ENCODE measurements at regions of chr7 and their contacts with region 1.

Region 1: DNA sequence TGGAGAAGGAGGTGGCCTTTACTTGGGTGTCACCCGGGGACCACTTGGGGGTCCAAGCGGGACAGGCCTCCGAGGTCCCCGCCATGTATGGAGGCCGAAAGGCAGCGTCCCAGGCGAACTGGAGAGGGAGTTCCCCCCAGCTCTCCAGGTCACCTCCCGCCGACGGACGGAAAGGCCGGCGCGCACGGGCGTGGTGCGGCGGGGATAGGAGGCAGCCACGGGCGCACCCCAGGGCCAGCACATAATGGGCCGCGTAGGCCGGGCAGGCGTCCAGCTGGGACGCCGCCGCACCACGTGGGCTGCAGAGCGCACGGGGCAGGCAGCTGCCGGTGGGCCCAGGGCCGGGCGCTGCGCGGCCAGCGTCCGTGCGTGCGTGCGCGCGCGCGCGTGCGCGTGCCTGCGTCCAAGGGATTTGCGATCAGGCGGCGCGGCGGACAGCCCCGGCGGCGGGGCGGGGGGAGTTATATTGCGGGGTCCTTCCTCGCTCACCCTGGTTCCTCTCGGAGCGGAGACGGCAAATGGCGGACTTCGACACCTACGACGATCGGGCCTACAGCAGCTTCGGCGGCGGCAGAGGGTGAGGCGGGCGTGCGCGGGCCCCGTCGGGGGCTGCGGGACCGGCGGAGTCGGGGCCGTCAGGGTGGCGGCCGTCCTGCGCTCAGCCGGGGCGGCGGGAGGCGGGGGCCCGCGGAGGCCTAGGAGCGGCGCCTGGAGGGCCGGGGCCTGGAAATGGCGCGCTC is at the start of gene EIF4H:
- DNase-seq: peak; percentile 97
- ATAC-seq: peak; percentile 75
- H3K4me3 Mint-ChIP-seq: peak within 1 kb of the TSS; percentile 94
- H3K27ac Mint-ChIP-seq: peak within 1 kb of the TSS; percentile 94
- H3K4me1 Mint-ChIP-seq: peaks cover 41% of the 10 kb centered on the region
- H3K27me3 Mint-ChIP-seq: no peaks in the 10 kb centered on the region
- total RNA-seq, gene EIF4H: 441 to 496 TPM

Region 2: DNA sequence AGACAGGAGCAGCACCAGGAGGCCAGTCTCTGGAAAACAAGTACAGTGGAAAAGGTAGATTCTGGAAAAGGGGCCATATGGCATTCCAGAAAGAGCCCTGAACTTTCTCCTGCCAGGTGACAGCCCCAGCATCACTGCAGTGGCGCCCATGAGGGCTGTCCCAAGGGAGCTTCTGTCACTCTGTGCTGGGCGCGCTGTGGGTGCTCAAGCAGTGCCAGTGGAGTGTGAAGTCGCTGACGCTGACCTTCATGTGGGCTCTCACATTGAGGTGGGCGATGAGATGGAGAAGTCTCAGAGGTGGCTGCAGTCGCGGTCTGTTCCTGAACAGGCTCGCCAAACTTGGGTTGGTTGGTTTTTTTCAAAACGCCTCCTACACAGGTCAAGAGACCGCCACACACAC is 807.9 kb before region 1 on chr7:
- CTCF ChIA-PET with region 1: no interaction called
- POLR2A ChIA-PET with region 1: no interaction called
- intact Hi-C with region 1: no loop called
- DNase-seq: no peak
- ATAC-seq: no peak
- H3K4me3 Mint-ChIP-seq: no peak overlapping the region
- H3K27ac Mint-ChIP-seq: no peak overlapping the region
- H3K4me1 Mint-ChIP-seq: no peaks in the 10 kb centered on the region
- H3K27me3 Mint-ChIP-seq: no peaks in the 10 kb centered on the region

Region 3: DNA sequence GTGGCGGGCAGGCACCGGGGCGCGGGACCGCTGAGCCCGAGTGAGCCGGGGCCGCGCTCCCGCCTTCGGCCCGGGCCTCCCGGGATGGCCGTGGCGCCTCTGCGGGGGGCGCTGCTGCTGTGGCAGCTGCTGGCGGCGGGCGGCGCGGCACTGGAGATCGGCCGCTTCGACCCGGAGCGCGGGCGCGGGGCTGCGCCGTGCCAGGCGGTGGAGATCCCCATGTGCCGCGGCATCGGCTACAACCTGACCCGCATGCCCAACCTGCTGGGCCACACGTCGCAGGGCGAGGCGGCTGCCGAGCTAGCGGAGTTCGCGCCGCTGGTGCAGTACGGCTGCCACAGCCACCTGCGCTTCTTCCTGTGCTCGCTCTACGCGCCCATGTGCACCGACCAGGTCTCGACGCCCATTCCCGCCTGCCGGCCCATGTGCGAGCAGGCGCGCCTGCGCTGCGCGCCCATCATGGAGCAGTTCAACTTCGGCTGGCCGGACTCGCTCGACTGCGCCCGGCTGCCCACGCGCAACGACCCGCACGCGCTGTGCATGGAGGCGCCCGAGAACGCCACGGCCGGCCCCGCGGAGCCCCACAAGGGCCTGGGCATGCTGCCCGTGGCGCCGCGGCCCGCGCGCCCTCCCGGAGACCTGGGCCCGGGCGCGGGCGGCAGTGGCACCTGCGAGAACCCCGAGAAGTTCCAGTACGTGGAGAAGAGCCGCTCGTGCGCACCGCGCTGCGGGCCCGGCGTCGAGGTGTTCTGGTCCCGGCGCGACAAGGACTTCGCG is 739.9 kb before region 1 on chr7:
- CTCF ChIA-PET with region 1: no interaction called
- POLR2A ChIA-PET with region 1: no interaction called
- intact Hi-C with region 1: loop called in 1 of 2 experiments (anchors 5 kb)
- DNase-seq: peak; percentile 53
- ATAC-seq: peak; percentile 38
- H3K4me3 Mint-ChIP-seq: peak overlapping the region; percentile 23
- H3K27ac Mint-ChIP-seq: no peak overlapping the region
- H3K4me1 Mint-ChIP-seq: no peaks in the 10 kb centered on the region
- H3K27me3 Mint-ChIP-seq: peaks cover 11% of the 10 kb centered on the region

Region 4: GRCh38 chr7:73851410-73852234 is 322.4 kb before region 1 on chr7:
- CTCF ChIA-PET with region 1: no interaction called
- POLR2A ChIA-PET with region 1: no interaction called
- intact Hi-C with region 1: loop called in 1 of 2 experiments (anchors 5 kb)
- DNase-seq: peak; percentile 60
- ATAC-seq: peak; percentile 96
- H3K4me3 Mint-ChIP-seq: no peak overlapping the region
- H3K27ac Mint-ChIP-seq: peak overlapping the region; percentile 65
- H3K4me1 Mint-ChIP-seq: peaks cover 33% of the 10 kb centered on the region
- H3K27me3 Mint-ChIP-seq: peaks cover 12% of the 10 kb centered on the region

Region 5: GRCh38 chr7:74083117-74083876 is 90.7 kb before region 1 on chr7 and contains the start of gene LIMK1:
- CTCF ChIA-PET with region 1: no interaction called
- POLR2A ChIA-PET with region 1: interaction called, 5 read pairs
- intact Hi-C with region 1: loop called (anchors 1 to 5 kb)
- DNase-seq: peak; percentile 90
- ATAC-seq: peak; percentile 89
- H3K4me3 Mint-ChIP-seq: peak within 1 kb of the TSS; percentile 79
- H3K27ac Mint-ChIP-seq: peak within 1 kb of the TSS; percentile 77
- H3K4me1 Mint-ChIP-seq: peaks cover 5% of the 10 kb centered on the region
- H3K27me3 Mint-ChIP-seq: no peaks in the 10 kb centered on the region
- total RNA-seq, gene LIMK1: 12.5 to 14.8 TPM

Region 6: DNA sequence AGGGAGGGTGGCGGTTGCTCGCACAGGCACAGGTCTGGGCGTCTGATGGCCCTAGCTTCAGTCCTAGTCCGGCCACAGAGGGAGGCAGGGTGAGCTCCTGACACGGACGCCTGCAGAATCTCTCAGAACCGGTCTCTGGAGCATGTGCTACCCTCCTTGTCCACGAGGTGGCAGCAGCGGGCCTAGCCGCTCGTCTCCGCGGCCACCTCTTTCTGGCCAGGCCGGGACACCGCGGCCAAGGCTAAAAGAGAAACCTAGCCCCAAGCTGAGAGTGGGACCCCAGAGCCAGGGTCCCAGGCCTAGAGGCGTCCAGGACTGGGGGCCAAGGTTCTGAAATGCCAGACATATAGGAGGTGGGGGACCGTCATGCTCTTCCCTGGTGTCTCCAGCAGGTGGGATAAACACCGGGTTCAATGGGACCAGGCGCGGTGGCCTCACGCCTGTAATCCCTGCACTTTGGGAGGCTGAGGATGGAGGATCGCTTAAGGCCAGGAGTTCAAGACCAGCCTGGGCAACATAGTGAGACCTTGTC is 32.6 kb after region 1 on chr7:
- CTCF ChIA-PET with region 1: interaction called, 9 read pairs
- POLR2A ChIA-PET with region 1: interaction called, 10 read pairs
- intact Hi-C with region 1: no loop called
- DNase-seq: peak; percentile 88
- ATAC-seq: peak; percentile 72
- H3K4me3 Mint-ChIP-seq: no peak overlapping the region
- H3K27ac Mint-ChIP-seq: no peak overlapping the region
- H3K4me1 Mint-ChIP-seq: peaks cover 10% of the 10 kb centered on the region
- H3K27me3 Mint-ChIP-seq: peaks cover 9% of the 10 kb centered on the region

Region 7: DNA sequence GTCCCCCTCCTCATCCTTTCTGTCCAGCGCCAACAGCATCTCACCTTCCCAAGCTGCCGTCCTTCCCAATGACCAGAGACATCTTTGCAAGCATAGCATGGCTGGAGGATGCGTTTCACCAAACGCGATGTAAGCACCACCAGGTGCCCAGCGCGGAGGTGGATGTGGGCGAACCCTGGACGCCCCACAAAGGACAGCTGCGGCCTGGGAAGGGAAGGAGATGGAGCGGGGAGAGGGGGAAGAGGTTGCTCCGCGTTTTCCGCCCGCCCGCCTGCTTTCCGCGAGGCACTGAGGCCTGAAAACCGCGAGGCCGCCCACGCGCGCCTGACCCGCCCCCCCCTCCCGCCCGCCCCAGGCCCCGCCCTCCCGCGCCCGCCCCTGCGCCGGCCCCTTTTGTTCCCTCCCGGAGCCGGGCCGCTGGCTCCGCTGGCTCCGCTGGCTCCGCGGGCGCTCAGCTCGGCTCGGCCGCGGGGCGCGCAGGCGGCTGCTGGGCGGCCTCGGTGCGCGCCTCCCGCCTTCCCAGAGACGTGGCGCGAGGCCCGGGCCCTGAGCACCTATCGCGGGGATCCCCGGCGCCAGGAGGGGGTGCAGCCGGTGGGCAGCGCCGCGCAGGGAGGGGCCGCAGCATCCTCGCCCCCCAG is 115.1 kb after region 1 on chr7 and contains the start of gene CLIP2:
- CTCF ChIA-PET with region 1: no interaction called
- POLR2A ChIA-PET with region 1: interaction called, 3 read pairs
- intact Hi-C with region 1: loop called in 1 of 2 experiments (anchors 1 kb)
- DNase-seq: peak; percentile 87
- ATAC-seq: peak; percentile 93
- H3K4me3 Mint-ChIP-seq: peak within 1 kb of the TSS; percentile 73
- H3K27ac Mint-ChIP-seq: peak within 1 kb of the TSS; percentile 60
- H3K4me1 Mint-ChIP-seq: peaks cover 16% of the 10 kb centered on the region
- H3K27me3 Mint-ChIP-seq: peaks cover 15% of the 10 kb centered on the region
- total RNA-seq, gene CLIP2: 1.4 to 1.8 TPM